ENCODE measurements at regions of chr19 and their contacts with region 1.

Region 1: DNA sequence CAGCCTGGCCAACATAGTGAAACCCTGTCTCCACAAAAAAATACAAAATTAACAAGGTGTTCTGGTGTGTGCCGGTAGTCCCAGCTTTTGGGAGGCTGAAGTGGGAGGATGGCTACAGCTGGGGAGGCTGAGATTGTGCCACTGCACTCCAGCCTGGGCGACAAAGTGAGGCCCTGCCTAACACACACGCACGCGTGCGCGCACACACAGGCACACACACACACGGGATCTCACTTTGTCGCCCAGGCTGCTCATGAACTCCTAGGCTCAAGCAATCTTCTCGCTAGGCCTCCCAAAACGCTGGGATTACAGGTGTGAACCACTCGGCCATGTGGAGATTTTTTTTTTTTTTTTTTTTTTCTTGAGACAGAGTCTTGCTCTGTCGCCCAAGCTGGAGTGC is 3.2 kb upstream of the BTBD2 start:
- DNase-seq: no peak
- H3K4me3 Mint-ChIP-seq: no peak overlapping the region
- H3K27ac Mint-ChIP-seq: no peak overlapping the region
- H3K4me1 Mint-ChIP-seq: peaks cover 7% of the 10 kb centered on the region
- H3K27me3 Mint-ChIP-seq: no peaks in the 10 kb centered on the region
- CTCF ChIP-seq: no peak

Region 2: GRCh38 chr19:2064788-2065524 is 46.2 kb after region 1 on chr19:
- CTCF ChIA-PET with region 1: interaction called, 4 read pairs
- intact Hi-C with region 1: loop called (anchors 1 kb)
- DNase-seq: no peak
- H3K4me3 Mint-ChIP-seq: no peak overlapping the region
- H3K27ac Mint-ChIP-seq: no peak overlapping the region
- H3K4me1 Mint-ChIP-seq: no peaks in the 10 kb centered on the region
- H3K27me3 Mint-ChIP-seq: no peaks in the 10 kb centered on the region
- CTCF ChIP-seq: no peak

Region 3: GRCh38 chr19:2076526-2076981 is 57.8 kb after region 1 on chr19:
- CTCF ChIA-PET with region 1: no interaction called
- intact Hi-C with region 1: no loop called
- DNase-seq: no peak
- H3K4me3 Mint-ChIP-seq: no peak overlapping the region
- H3K27ac Mint-ChIP-seq: no peak overlapping the region
- H3K4me1 Mint-ChIP-seq: no peaks in the 10 kb centered on the region
- H3K27me3 Mint-ChIP-seq: no peaks in the 10 kb centered on the region
- CTCF ChIP-seq: no peak

Region 4: GRCh38 chr19:2135474-2136402 is 117.0 kb after region 1 on chr19:
- CTCF ChIA-PET with region 1: no interaction called
- intact Hi-C with region 1: no loop called
- DNase-seq: no peak
- H3K4me3 Mint-ChIP-seq: no peak overlapping the region
- H3K27ac Mint-ChIP-seq: no peak overlapping the region
- H3K4me1 Mint-ChIP-seq: no peaks in the 10 kb centered on the region
- H3K27me3 Mint-ChIP-seq: no peaks in the 10 kb centered on the region
- CTCF ChIP-seq: no peak